Calu3 (cell line): ENCODE measurements at regions of chr5 and their contacts with region 1.

Region 1: DNA sequence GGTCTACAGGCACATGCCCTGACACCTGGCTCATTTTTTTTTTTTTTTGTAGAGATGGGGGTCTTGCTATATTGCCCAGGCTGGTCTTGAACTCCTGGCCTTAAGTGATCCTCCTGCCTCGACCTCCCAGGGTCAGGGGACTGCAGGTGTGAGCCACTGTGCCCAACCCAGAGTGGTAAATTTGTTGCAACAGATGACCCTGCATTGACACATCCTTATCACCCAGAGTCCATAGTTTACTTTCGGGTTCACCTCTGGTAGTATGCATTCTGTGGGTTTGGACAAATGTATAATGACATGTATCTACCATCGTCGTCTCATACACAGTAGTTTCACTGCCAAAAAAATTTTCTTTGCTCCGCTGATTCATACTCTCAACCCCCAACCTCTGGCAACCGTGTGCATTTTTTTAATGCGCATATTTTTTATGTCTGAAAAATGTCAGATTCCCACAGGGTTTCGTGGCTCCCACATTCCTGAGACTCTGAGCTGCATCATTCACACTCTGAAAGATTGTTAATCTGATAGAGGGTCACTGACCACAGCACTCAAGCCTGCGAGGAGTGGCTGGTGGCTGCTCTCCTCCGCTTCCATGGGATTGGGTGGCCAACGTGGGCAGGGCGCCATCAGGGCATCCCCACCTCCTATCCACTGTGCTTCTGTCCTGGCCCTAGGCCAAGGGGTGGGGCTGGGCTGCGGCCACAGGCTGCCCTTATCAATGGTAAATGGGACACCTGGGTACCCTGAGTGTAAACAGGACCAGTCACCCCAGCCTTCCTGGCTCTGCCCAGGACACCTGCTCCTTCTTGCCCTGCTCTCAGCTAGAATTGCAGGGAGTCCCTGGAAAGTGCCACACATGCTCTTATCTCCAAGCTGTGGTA is 9.6 kb downstream of the NDST1 start:
- DNase-seq: peak; percentile 98
- H3K4me3 Mint-ChIP-seq: peak overlapping the region; percentile 2
- H3K27ac Mint-ChIP-seq: peak overlapping the region; percentile 9
- H3K4me1 Mint-ChIP-seq: peaks cover 58% of the 10 kb centered on the region
- H3K27me3 Mint-ChIP-seq: no peaks in the 10 kb centered on the region
- CTCF ChIP-seq: no peak

Region 2: DNA sequence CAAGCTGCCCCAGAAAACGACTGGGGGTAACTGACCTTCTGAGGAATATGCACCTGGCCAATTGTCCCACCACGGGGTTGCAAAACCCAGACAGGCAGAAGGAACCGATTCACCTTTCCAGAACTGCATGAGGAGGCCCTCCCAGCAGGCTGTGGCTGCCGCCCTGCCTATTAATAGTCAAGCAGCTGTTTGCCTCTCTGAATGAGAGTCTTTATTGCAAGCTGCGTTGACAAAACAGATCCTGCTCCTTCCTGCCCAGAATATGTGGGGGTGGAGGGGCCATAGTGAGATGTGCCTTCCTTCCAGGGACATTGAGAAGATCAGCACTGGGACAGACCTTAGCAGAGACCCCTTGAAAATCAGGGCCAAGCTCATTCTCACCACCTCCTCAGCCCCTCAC is 178.3 kb before region 1 on chr5:
- CTCF ChIA-PET with region 1: no interaction called
- intact Hi-C with region 1: no loop called
- DNase-seq: no peak
- H3K4me3 Mint-ChIP-seq: no peak overlapping the region
- H3K27ac Mint-ChIP-seq: no peak overlapping the region
- H3K4me1 Mint-ChIP-seq: no peaks in the 10 kb centered on the region
- H3K27me3 Mint-ChIP-seq: no peaks in the 10 kb centered on the region
- CTCF ChIP-seq: no peak

Region 3: DNA sequence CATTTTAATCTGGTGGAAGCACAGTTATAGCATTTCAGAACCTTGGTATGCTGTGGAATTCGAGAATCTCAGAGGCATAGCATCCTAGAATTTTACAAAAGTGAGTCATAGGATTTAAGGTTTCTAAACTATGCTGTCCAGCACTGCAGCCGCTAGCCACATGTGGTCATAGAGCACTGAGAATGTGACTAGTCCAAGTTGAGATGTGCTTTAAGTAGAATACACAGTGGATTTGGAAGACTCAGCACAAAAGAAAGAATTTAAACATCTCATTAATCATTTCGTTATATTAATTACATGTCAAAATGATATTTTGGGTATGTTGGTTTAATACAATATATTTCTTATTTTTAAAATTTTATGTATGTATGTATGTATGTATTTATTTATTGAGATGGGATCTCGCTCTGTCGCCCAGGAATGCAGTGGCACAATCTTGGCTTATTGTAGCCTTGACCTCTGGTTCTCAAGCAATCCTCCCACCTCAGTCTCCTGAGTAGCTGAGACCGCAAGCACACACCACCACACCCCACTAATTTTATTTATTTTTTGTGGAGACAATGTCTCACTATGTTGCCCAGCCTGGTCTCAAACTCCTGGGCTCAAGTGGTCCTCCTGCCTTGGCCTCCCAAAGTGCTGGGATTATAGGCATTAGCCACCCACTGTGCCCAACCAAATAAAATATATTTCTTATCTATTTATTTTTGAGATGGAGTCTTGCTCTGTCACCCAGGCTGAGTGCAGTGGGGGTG is 47.6 kb before region 1 on chr5:
- CTCF ChIA-PET with region 1: no interaction called
- intact Hi-C with region 1: loop called (anchors 5 kb)
- DNase-seq: peak; percentile 46
- H3K4me3 Mint-ChIP-seq: no peak overlapping the region
- H3K27ac Mint-ChIP-seq: no peak overlapping the region
- H3K4me1 Mint-ChIP-seq: peaks cover 25% of the 10 kb centered on the region
- H3K27me3 Mint-ChIP-seq: no peaks in the 10 kb centered on the region
- CTCF ChIP-seq: no peak

Region 4: DNA sequence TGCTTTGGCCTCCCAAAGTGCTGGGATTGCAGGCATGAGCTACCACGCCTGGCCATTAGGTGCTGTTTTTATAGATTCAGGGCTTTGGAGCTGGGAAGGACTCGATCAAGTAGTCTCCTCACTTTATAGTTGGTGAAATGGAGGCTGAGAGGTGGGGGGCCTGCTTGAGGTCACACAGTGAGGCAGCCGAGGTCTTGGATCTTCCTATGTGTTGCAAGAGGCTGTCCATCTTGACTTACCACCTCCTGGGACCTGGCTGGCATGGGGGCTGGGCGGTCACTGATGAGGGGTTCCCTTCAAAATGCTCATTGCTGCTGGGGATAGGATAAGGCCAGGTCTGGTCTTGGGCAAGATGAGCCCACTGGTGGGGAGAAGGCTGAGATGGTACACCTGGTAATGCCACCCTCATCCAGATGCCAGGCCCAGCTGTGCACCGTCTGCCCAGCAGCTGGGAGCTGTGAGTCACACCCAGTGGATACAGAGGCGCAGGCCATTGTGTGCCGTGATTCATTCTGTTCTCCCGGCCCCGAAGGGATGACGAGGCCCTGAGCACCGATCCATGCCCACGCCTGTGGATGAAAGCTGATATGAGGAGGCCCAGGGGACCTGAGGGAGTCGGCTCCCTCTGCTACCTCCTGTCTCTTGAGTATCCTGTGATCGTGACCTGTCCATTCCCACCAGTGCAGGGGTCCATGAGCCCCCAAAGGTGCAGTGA is 20.1 kb before region 1 on chr5:
- CTCF ChIA-PET with region 1: interaction called, 3 read pairs
- intact Hi-C with region 1: loop called (anchors 2 kb)
- DNase-seq: peak; percentile 82
- H3K4me3 Mint-ChIP-seq: no peak overlapping the region
- H3K27ac Mint-ChIP-seq: no peak overlapping the region
- H3K4me1 Mint-ChIP-seq: peaks cover 53% of the 10 kb centered on the region
- H3K27me3 Mint-ChIP-seq: no peaks in the 10 kb centered on the region
- CTCF ChIP-seq: no peak